ENCODE measurements at regions of chr16 and their contacts with region 1.

Region 1: DNA sequence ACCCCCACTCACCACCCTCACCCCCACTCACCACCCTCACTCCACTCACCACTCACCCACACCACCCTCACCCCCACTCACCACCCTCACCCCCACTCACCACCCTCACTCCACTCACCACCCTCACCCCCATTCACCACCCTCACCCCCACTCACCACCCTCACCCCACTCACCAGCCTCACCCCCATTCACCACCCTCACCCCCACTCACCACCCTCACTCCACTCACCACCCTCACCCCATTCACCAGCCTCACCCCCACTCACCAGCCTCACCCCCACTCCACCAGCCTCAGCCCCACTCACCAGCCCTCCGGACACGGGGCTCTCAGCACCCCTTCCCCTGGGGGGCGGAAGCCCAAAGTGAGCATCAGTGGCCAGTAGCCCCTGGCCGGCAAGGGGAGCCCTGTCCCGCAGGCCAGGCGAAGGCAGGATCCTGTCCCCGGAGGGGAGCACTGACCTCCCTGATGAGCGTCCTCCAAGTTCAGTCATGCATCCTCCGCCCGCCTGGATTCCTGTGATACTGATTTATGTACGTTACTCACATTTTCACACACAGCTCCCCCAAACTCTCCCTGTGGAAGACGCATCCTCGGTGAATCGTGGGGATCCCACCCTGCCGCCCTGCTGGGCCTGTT is 18.0 kb upstream of the C1QTNF8 start:
- DNase-seq: no peak
- H3K4me3 ChIP-seq: no peak overlapping the region
- CTCF ChIP-seq: no peak

Region 2: DNA sequence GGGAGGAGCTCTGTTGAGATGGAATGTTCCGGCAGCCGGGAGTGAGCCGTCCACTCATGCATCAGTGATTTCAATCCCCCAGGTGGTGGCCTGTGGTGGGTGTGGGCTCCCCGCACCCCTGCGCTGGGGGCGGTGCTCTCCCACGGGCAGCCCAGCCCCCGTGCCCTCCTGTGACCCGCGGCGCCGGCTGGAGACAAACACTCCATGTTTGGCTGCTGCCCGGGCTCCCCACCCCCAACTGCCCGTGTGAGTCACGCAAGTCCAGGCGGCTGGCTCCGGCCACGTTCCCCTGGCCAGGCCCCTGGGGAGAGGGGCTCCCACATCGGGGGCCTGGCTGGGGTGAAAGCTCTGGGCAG is 68.3 kb after region 1 on chr16:
- in situ Hi-C with region 1: loop called (anchors 5 kb)
- DNase-seq: peak; percentile 34
- H3K4me3 ChIP-seq: no peak overlapping the region
- CTCF ChIP-seq: no peak